GM12878 (cell line): ENCODE measurements at regions of chr5 and their contacts with region 1.

Region 1: DNA sequence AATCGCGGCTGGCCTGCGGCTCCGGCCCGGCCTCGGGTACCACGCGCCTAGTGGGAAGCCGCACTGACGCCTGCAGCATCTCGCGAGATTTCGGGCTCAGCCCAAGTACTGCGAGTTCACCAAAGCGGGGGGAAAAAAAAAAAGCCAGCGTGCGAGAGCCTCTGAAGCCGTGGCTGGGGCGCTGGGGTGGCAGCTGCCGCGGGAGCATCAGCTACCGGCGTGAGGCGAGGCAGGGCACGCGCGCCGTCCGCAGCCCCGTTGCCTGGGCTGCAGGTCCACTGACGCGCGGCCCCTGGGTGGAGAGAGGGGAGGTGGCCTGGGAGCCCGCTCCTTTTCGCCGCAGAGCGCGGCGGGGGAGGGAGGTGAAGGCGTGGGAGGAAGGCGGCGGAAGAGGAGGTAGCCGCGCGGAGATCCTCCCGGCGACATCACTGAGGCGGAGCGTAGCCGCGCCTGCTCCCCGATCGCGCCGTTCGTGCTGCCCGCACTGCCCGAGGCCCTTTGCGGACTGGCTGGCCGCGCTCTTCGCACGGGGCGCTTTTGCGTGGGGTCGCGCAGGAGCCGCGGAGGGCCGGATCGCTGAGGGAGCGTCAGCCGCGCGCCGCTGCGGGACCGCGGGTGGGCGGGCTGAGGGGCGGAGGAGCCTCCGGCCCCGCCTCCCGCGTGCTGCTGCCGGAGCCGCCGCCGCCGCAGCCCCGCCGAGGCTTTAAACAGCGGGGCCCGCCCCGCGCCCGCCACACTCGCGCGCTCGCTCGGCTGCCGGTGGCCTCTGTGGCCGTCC is at the start of gene SLC12A2:
- DNase-seq: peak; percentile 74
- ATAC-seq: peak; percentile 68
- H3K4me3 ChIP-seq: peak within 1 kb of the TSS; percentile 86
- H3K27ac ChIP-seq: peak within 1 kb of the TSS; percentile 90
- H3K4me1 ChIP-seq: no peaks in the 10 kb centered on the region; the same call in 1 of the 2 replicates
- H3K27me3 ChIP-seq: no peaks in the 10 kb centered on the region
- CTCF ChIP-seq: no peak
- EP300 ChIP-seq: peak in 1 of 2 experiments; percentile 6; a peak in 1 of 4 replicates
- POLR2A ChIP-seq: peak; percentile 90
- RAD21 ChIP-seq: no peak
- polyA plus RNA-seq, gene SLC12A2: 6.3 to 6.9 TPM

Region 2: GRCh38 chr5:126753227-126753626 is 1330.0 kb before region 1 on chr5:
- CTCF ChIA-PET with region 1: no interaction called
- POLR2A ChIA-PET with region 1: no interaction called
- RAD21 ChIA-PET with region 1: no interaction called
- SMC1A ChIA-PET with region 1: no interaction called
- in situ Hi-C with region 1: loop called (anchors 25 kb)
- intact Hi-C with region 1: no loop called
- DNase-seq: no peak
- ATAC-seq: no peak
- H3K4me3 ChIP-seq: no peak overlapping the region
- H3K27ac ChIP-seq: no peak overlapping the region
- H3K4me1 ChIP-seq: peaks cover 14% of the 10 kb centered on the region
- H3K27me3 ChIP-seq: no peaks in the 10 kb centered on the region
- CTCF ChIP-seq: no peak
- EP300 ChIP-seq: no peak
- POLR2A ChIP-seq: no peak
- RAD21 ChIP-seq: no peak

Region 3: GRCh38 chr5:126769703-126770102 is 1313.5 kb before region 1 on chr5:
- CTCF ChIA-PET with region 1: no interaction called
- POLR2A ChIA-PET with region 1: no interaction called
- RAD21 ChIA-PET with region 1: no interaction called
- SMC1A ChIA-PET with region 1: no interaction called
- in situ Hi-C with region 1: loop called (anchors 25 kb)
- intact Hi-C with region 1: loop called (anchors 10 kb)
- DNase-seq: no peak
- ATAC-seq: peak; percentile 63
- H3K4me3 ChIP-seq: no peak overlapping the region
- H3K27ac ChIP-seq: peak overlapping the region; percentile 62; the same call in 1 of the 2 replicates
- H3K4me1 ChIP-seq: peaks cover 12% of the 10 kb centered on the region
- H3K27me3 ChIP-seq: no peaks in the 10 kb centered on the region
- CTCF ChIP-seq: no peak
- EP300 ChIP-seq: no peak
- POLR2A ChIP-seq: no peak
- RAD21 ChIP-seq: no peak

Region 4: DNA sequence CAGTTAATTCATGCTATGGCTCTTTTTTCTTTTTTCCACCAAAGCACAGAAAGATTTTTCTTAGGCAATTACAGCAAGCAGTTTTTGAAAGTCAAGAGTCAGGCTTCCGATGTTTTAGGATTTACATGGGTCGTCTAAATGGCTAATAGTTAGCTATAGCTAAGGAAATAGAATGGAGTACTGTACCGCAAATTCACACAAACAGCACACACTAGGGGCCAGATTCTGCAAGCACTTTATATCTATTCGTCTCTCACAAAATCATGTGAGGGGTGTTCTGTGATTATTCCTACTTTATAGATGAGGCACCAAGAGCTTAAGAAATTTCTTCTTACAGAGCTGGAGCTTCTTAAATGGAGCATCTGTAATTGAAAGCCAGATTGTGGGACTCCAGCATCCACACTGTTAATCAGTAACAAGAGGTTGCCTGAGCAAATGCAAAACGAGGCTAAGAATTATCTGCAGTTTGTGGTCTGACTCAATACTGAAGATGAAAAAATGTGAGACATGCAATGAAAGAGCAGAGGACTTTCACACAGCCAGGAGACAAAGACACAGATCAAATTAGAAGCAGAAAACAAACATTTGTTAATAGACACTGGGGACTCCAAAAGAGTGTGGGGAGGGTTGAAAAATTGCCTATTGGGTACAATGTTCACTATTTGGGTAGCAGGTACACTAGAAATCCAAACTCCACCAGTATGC is 497.0 kb before region 1 on chr5:
- CTCF ChIA-PET with region 1: interaction called, 9 read pairs
- POLR2A ChIA-PET with region 1: interaction called, 5 read pairs
- RAD21 ChIA-PET with region 1: interaction called, 8 read pairs
- SMC1A ChIA-PET with region 1: interaction called, 6 read pairs
- in situ Hi-C with region 1: no loop called
- intact Hi-C with region 1: loop called (anchors 2 kb)
- DNase-seq: peak; percentile 79
- ATAC-seq: peak; percentile 69
- H3K4me3 ChIP-seq: 0 out of 2 replicates have a peak overlapping the region, but pooled peaks have one; percentile 13
- H3K27ac ChIP-seq: peak overlapping the region; percentile 56; the same call in 1 of the 2 replicates
- H3K4me1 ChIP-seq: peaks cover 35% of the 10 kb centered on the region
- H3K27me3 ChIP-seq: no peaks in the 10 kb centered on the region
- CTCF ChIP-seq: no peak
- EP300 ChIP-seq: peak; percentile 84 to 86
- POLR2A ChIP-seq: no peak
- RAD21 ChIP-seq: no peak

Region 5: GRCh38 chr5:127757576-127757975 is 325.6 kb before region 1 on chr5:
- CTCF ChIA-PET with region 1: interaction called, 4 read pairs
- POLR2A ChIA-PET with region 1: no interaction called
- RAD21 ChIA-PET with region 1: interaction called, 3 read pairs
- SMC1A ChIA-PET with region 1: no interaction called
- in situ Hi-C with region 1: no loop called
- intact Hi-C with region 1: loop called (anchors 5 kb)
- DNase-seq: peak; percentile 16
- ATAC-seq: peak; percentile 92
- H3K4me3 ChIP-seq: no peak overlapping the region
- H3K27ac ChIP-seq: no peak overlapping the region
- H3K4me1 ChIP-seq: no peaks in the 10 kb centered on the region
- H3K27me3 ChIP-seq: no peaks in the 10 kb centered on the region
- CTCF ChIP-seq: peak; percentile 14 to 60 (median 21); a peak in 4 of 6 replicates
- EP300 ChIP-seq: no peak
- POLR2A ChIP-seq: no peak
- RAD21 ChIP-seq: peak; percentile 65

Region 6: GRCh38 chr5:127909078-127909477 is 174.1 kb before region 1 on chr5:
- CTCF ChIA-PET with region 1: interaction called, 28 read pairs
- POLR2A ChIA-PET with region 1: interaction called, 4 read pairs
- RAD21 ChIA-PET with region 1: interaction called, 25 read pairs
- SMC1A ChIA-PET with region 1: interaction called, 30 read pairs
- in situ Hi-C with region 1: no loop called
- intact Hi-C with region 1: loop called (anchors 2 kb)
- DNase-seq: no peak
- ATAC-seq: peak; percentile 96
- H3K4me3 ChIP-seq: no peak overlapping the region
- H3K27ac ChIP-seq: no peak overlapping the region
- H3K4me1 ChIP-seq: no peaks in the 10 kb centered on the region
- H3K27me3 ChIP-seq: no peaks in the 10 kb centered on the region
- CTCF ChIP-seq: peak; percentile 65 to 82 (median 75)
- EP300 ChIP-seq: no peak
- POLR2A ChIP-seq: no peak
- RAD21 ChIP-seq: peak; percentile 82

Region 7: DNA sequence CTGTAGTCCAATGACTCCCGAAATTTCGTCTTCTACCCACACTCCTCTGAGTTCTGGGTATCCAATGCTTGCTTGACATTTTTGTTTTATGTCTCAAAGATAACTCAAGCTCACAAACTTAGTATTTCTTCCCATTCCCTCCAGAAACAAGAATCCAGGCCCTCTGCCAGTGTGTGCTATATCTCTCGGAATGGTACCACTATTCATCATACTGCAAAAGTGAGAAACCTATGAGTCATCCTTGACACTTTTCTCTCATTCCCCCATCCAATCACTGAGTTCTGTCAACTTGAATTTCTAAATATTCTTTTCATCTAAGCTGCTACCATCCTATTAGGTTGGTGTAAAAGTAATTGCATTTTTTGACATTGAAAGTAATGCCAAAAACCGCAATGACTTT is 10.1 kb after region 1 on chr5:
- CTCF ChIA-PET with region 1: interaction called, 4 read pairs
- POLR2A ChIA-PET with region 1: interaction called, 25 read pairs
- RAD21 ChIA-PET with region 1: interaction called, 8 read pairs
- SMC1A ChIA-PET with region 1: interaction called, 17 read pairs
- in situ Hi-C with region 1: no loop called
- intact Hi-C with region 1: no loop called
- DNase-seq: no peak
- ATAC-seq: no peak
- H3K4me3 ChIP-seq: no peak overlapping the region
- H3K27ac ChIP-seq: no peak overlapping the region
- H3K4me1 ChIP-seq: no peaks in the 10 kb centered on the region
- H3K27me3 ChIP-seq: no peaks in the 10 kb centered on the region
- CTCF ChIP-seq: no peak
- EP300 ChIP-seq: no peak
- POLR2A ChIP-seq: no peak
- RAD21 ChIP-seq: no peak

Region 8: GRCh38 chr5:128358826-128359225 is 275.6 kb after region 1 on chr5:
- CTCF ChIA-PET with region 1: no interaction called
- POLR2A ChIA-PET with region 1: no interaction called
- RAD21 ChIA-PET with region 1: no interaction called
- SMC1A ChIA-PET with region 1: no interaction called
- in situ Hi-C with region 1: no loop called
- intact Hi-C with region 1: no loop called
- DNase-seq: no peak
- ATAC-seq: no peak
- H3K4me3 ChIP-seq: no peak overlapping the region
- H3K27ac ChIP-seq: no peak overlapping the region
- H3K4me1 ChIP-seq: no peaks in the 10 kb centered on the region
- H3K27me3 ChIP-seq: no peaks in the 10 kb centered on the region
- CTCF ChIP-seq: no peak
- EP300 ChIP-seq: no peak
- POLR2A ChIP-seq: no peak
- RAD21 ChIP-seq: no peak